Panc1 (cell line): ENCODE measurements at regions of chr10 and their contacts with region 1.

Region 1: DNA sequence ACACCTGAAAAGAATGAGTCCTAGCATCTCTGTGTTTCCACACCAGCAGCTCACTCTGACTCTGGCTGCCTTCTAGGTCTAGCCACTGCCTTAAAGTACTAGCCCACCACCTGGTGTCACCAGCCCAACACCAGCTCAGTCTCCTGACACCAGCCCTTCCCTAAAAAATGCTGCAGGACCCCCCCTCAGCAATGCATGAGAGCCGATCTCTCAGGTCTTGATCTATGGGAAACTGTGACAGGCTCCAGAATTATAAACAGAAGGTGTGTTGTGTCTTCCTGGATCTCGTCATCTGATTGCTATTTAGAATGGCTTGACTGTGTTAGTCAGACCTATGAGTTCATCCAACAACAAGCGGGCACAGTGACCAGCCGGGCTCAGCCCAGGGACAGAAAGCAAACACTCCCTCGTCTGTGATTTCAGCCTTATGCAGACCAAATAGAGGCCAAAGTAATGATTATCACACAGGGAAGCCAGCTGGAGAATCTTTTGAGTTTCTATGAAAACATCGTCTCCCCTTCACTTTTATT is 66.6 kb downstream of the CUBN start:
- DNase-seq: peak; percentile 93
- ATAC-seq: peak; percentile 93
- H3K4me3 ChIP-seq: peak overlapping the region in 1 of 2 experiments; percentile 32; a peak in 2 of 4 replicates
- H3K27ac ChIP-seq: peak overlapping the region; percentile 97
- H3K4me1 ChIP-seq: peaks cover 60% of the 10 kb centered on the region
- H3K27me3 ChIP-seq: no peaks in the 10 kb centered on the region
- CTCF ChIP-seq: peak; percentile 11; the same call in 1 of the 2 replicates

Region 2: DNA sequence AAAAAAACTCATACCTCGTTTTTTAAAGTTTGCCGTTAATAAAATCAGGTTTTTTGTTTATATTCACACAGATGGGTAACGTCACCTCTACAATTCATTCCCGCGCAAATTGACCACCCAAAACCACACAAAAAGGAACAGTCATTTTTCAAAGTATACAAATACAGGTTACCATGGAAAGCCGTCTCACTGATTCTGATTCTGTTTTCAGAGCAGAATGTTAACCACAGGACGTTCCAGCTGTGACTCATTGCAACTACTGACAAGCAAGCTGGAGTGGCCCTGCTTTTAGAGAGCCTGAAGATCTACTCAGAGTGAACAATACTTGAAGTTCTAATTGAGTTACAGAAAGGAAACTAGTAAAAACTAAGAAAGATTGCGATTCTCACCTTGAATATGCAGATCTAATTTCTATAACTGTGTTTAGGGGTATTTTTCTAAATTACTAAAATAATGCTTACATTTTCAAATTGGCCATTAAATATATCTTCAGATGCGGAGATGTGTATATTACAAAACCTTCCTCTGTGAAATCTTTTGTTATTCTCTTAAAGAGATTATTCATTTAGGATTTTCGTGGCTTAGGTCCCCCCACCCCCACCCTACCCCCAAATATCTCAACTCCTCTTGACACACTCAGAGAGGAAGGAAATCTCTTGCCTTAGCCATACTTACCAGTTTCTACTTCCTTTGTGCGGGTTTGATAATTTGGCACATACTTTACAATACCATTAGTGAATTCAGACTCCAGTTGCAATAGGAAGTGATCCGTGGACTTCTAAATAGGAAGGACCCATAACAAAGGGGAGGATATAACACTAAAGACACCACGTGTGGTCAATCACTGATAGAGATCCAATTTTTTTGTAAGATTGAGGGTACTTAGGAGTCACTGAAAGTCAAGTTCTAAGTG is 39.4 kb before region 1 on chr10:
- CTCF ChIA-PET with region 1: no interaction called
- POLR2A ChIA-PET with region 1: interaction called, 3 read pairs
- in situ Hi-C with region 1: no loop called
- intact Hi-C with region 1: loop called (anchors 5 kb)
- DNase-seq: no peak
- ATAC-seq: peak; percentile 89
- H3K4me3 ChIP-seq: 0 out of 4 replicates have a peak overlapping the region, but pooled peaks of 1 of the 2 experiments have one; percentile 0
- H3K27ac ChIP-seq: peak overlapping the region; percentile 99
- H3K4me1 ChIP-seq: peaks cover 67% of the 10 kb centered on the region
- H3K27me3 ChIP-seq: no peaks in the 10 kb centered on the region
- CTCF ChIP-seq: no peak

Region 3: DNA sequence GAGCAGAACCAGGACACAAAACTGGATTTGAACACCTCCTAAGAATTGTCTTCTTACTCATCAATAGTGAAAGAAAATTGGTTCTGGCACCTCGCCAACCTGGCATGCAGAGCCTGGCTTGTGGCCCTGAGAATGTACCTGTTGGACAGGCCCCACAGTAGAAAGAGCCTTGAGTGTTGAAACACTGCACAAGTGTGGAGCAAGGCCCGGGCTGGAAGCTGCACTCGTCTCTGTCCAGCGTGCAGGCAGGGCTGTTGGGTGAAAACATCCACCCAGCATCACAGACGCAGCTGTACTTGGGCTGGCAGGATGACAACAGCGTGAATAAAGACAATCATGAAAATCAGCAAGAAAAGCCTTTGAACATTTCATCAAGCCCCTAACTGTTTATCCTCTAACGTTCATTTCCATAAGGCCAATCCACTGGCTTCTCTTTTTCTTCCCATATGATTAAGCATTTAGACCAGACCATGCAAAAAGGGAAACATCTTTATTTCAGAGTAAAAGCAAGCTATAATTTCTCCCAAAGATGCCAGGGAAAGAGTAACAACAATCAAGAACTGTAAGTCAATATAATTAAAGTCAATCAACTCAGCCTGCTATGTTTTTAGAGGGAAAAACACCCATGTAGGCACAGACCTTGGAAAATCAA is 51.0 kb after region 1 on chr10:
- CTCF ChIA-PET with region 1: no interaction called
- POLR2A ChIA-PET with region 1: no interaction called
- in situ Hi-C with region 1: no loop called
- intact Hi-C with region 1: loop called (anchors 5 kb)
- DNase-seq: no peak
- ATAC-seq: peak; percentile 53
- H3K4me3 ChIP-seq: no peak overlapping the region
- H3K27ac ChIP-seq: peak overlapping the region; percentile 99
- H3K4me1 ChIP-seq: peaks cover 39% of the 10 kb centered on the region
- H3K27me3 ChIP-seq: no peaks in the 10 kb centered on the region
- CTCF ChIP-seq: no peak

Region 4: GRCh38 chr10:17175551-17175950 is 112.5 kb after region 1 on chr10:
- CTCF ChIA-PET with region 1: no interaction called
- POLR2A ChIA-PET with region 1: no interaction called
- in situ Hi-C with region 1: no loop called
- intact Hi-C with region 1: loop called (anchors 10 kb)
- DNase-seq: no peak
- ATAC-seq: peak; percentile 78
- H3K4me3 ChIP-seq: peak overlapping the region in 1 of 2 experiments; percentile 13; a peak in 3 of 4 replicates
- H3K27ac ChIP-seq: peak overlapping the region; percentile 93
- H3K4me1 ChIP-seq: peaks cover 37% of the 10 kb centered on the region
- H3K27me3 ChIP-seq: no peaks in the 10 kb centered on the region
- CTCF ChIP-seq: no peak

Region 5: GRCh38 chr10:17228091-17228940 is 165.3 kb after region 1 on chr10 and contains the start of gene VIM:
- CTCF ChIA-PET with region 1: no interaction called
- POLR2A ChIA-PET with region 1: no interaction called
- in situ Hi-C with region 1: no loop called
- intact Hi-C with region 1: loop called (anchors 10 kb)
- DNase-seq: no peak
- ATAC-seq: peak; percentile 75
- H3K4me3 ChIP-seq: peak within 1 kb of the TSS; percentile 64 to 88
- H3K27ac ChIP-seq: peak within 1 kb of the TSS; percentile 96
- H3K4me1 ChIP-seq: peaks cover 26% of the 10 kb centered on the region
- H3K27me3 ChIP-seq: no peaks in the 10 kb centered on the region
- CTCF ChIP-seq: no peak
- total RNA-seq, gene VIM: 3,436 TPM